ENCODE measurements at regions of chr21 and their contacts with region 1.

Region 1: GRCh38 chr21:26845066-26845758 is at the start of gene ADAMTS1:
- DNase-seq: peak; percentile 27
- H3K4me3 Mint-ChIP-seq: peak within 1 kb of the TSS; percentile 72
- H3K27ac Mint-ChIP-seq: no peak within 1 kb of the TSS
- H3K4me1 Mint-ChIP-seq: peaks cover 33% of the 10 kb centered on the region
- H3K27me3 Mint-ChIP-seq: peaks cover 73% of the 10 kb centered on the region
- total RNA-seq, gene ADAMTS1: not detected

Region 2: GRCh38 chr21:26961698-26962097 is 116.5 kb after region 1 on chr21:
- CTCF ChIA-PET with region 1: no interaction called
- intact Hi-C with region 1: loop called (anchors 5 kb)
- DNase-seq: peak; percentile 8
- H3K4me3 Mint-ChIP-seq: no peak overlapping the region
- H3K27ac Mint-ChIP-seq: no peak overlapping the region
- H3K4me1 Mint-ChIP-seq: peaks cover 3% of the 10 kb centered on the region
- H3K27me3 Mint-ChIP-seq: peaks cover 34% of the 10 kb centered on the region

Region 3: GRCh38 chr21:27134516-27134915 is 289.3 kb after region 1 on chr21:
- CTCF ChIA-PET with region 1: no interaction called
- intact Hi-C with region 1: no loop called
- DNase-seq: no peak
- H3K4me3 Mint-ChIP-seq: no peak overlapping the region
- H3K27ac Mint-ChIP-seq: no peak overlapping the region
- H3K4me1 Mint-ChIP-seq: no peaks in the 10 kb centered on the region
- H3K27me3 Mint-ChIP-seq: no peaks in the 10 kb centered on the region

Region 4: GRCh38 chr21:27700974-27701614 is 855.9 kb after region 1 on chr21:
- CTCF ChIA-PET with region 1: interaction called, 9 read pairs
- intact Hi-C with region 1: loop called (anchors 1 kb)
- DNase-seq: peak; percentile 80
- H3K4me3 Mint-ChIP-seq: no peak overlapping the region
- H3K27ac Mint-ChIP-seq: no peak overlapping the region
- H3K4me1 Mint-ChIP-seq: peaks cover 2% of the 10 kb centered on the region
- H3K27me3 Mint-ChIP-seq: no peaks in the 10 kb centered on the region

Region 5: GRCh38 chr21:28336314-28336713 is 1491.1 kb after region 1 on chr21:
- CTCF ChIA-PET with region 1: interaction called, 3 read pairs
- intact Hi-C with region 1: loop called (anchors 1 kb)
- DNase-seq: no peak
- H3K4me3 Mint-ChIP-seq: no peak overlapping the region
- H3K27ac Mint-ChIP-seq: no peak overlapping the region
- H3K4me1 Mint-ChIP-seq: peaks cover 2% of the 10 kb centered on the region
- H3K27me3 Mint-ChIP-seq: no peaks in the 10 kb centered on the region